Activated CD4-positive, alpha-beta T cell treated with anti-CD3 and anti-CD28 coated beads for 36 hours (primary cell): ENCODE measurements at regions of chr9 and their contacts with region 1.

Region 1: DNA sequence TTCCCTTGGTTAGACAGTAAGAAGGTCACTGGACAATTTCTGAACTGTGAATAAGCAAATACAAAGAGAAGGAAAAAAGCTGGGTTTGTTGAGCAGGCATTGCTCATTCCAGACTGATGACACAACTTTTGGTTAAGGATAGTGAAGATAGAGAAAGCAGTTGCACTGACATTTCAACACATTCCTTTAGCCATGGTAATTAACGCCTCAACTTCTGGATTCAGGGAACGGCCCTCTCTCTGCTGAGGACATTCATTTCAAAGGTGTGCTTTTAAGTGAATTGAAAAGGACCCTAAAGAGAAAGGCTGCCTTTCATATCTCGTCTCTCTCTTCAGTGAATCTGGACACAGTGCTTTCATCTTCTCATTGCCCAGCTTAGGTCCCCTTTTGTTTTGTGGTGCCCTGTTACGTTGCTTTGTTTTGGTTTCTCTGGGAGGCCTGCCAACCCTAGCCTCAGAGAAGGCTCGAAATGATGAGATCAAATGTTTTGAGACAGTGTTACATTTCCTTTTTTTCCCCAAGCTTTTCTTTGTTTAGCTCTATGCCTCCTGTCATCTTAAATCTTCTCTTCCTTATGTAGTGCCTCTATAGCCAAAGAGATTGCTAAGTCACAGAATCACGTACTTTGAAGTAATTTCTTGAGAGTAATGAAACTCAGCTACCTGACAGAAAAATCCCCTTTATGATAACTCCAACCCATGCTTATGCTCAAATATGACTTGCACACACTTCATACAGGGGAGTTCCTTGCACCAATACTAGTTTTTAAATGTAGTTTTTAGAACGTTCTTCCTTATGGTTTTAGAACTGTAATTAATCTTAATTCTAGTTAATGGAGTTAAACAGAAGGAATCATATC is 94.4 kb upstream of the IFNE start:
- DNase-seq: peak; percentile 66
- ATAC-seq: peak; percentile 90
- H3K4me3 Mint-ChIP-seq: no peak overlapping the region
- H3K27ac Mint-ChIP-seq: peak overlapping the region; percentile 61
- H3K4me1 Mint-ChIP-seq: peaks cover 32% of the 10 kb centered on the region
- H3K27me3 Mint-ChIP-seq: peaks cover 4% of the 10 kb centered on the region

Region 2: GRCh38 chr9:21210311-21210710 is 366.2 kb before region 1 on chr9:
- CTCF ChIA-PET with region 1: no interaction called
- POLR2A ChIA-PET with region 1: no interaction called
- intact Hi-C with region 1: no loop called
- DNase-seq: no peak
- ATAC-seq: no peak
- H3K4me3 Mint-ChIP-seq: no peak overlapping the region
- H3K27ac Mint-ChIP-seq: no peak overlapping the region
- H3K4me1 Mint-ChIP-seq: peaks cover 8% of the 10 kb centered on the region
- H3K27me3 Mint-ChIP-seq: peaks cover 14% of the 10 kb centered on the region

Region 3: DNA sequence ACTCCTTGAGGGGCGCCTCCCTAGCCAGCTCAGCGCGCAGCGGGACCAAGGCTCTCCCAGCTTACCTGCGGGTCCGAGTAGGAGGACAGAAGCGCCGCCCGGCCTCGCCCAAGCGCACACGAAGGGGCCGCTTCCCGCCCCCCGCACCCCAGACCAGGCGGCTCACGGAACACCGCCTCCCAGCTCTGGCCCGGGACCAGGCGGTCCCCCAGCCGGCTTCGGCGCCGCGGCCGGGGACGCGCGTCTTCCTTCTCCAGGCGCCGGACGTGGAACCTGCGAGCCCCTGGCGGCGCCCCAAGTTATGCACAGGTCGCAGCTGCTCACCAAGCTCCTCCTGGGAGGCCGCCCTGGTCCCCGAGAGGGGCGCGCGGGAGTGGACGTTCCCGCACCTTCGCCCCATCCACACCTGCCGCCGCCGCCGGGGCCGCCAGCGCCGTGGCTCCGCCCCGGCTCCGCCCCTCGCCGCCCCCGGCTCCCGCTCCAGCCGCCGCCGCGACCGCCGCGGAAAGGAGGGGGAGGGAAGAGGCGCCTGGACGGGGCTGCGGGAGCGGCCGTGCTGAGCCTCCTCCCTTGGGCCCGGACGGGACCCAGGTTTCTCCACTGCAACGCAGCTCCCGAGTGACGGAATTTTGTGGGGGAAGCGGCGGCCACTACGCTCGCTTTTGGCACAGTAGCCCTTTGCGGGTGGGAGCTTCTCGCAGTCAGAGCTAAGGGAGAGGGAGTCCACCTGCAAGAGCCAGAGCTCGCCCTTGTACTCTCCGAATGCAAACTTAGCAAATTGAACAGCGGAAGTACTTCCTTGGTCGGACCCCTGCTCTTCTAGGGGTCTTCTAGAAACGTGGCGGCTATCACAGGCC is 16.9 kb before region 1 on chr9:
- CTCF ChIA-PET with region 1: interaction called, 8 read pairs
- POLR2A ChIA-PET with region 1: interaction called, 5 read pairs
- intact Hi-C with region 1: loop called in 1 of 2 experiments (anchors 2 kb)
- DNase-seq: peak; percentile 69
- ATAC-seq: peak; percentile 88
- H3K4me3 Mint-ChIP-seq: peak overlapping the region; percentile 86
- H3K27ac Mint-ChIP-seq: no peak overlapping the region
- H3K4me1 Mint-ChIP-seq: peaks cover 33% of the 10 kb centered on the region
- H3K27me3 Mint-ChIP-seq: peaks cover 30% of the 10 kb centered on the region

Region 4: DNA sequence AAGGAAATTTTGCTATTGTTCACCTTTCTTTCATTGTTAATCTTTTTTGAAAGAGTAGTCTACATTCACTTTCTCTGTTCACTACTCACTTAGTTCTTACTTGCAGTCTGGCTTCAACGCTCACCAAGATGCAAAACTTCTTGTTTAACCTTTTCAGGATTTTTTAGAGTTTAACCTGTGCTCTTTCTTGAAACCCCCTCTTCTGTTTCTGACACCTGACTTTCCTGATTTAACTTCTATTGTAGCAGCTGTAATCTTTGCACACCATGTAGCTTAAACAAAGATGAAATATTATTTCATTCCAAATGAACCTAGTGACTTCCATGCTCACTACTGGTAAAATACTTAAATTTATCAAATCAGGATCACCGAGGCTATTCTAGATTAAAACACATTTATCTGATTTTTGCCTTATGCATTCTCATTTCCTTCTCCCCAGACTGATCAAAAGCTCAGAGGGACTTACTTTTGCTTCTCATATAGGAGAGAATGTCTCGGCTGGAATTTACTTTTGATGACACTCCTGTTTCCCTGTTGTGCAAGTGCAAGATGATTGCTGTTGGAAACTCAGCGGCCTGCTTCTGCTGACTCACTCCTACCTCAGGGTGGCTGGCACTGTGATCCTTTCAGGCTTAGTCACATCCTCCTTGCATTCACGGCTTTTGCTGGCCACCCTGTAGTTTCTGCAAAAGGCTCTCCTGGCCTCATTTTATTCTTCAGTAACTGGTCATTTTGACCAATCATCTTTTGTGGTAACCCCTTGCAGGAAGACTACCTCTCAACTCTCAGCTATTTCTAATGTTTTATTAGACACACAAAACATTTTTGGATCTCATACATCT is 14.9 kb after region 1 on chr9:
- CTCF ChIA-PET with region 1: interaction called, 3 read pairs
- POLR2A ChIA-PET with region 1: no interaction called
- intact Hi-C with region 1: loop called in 1 of 2 experiments (anchors 1 kb)
- DNase-seq: peak; percentile 81
- ATAC-seq: peak; percentile 99
- H3K4me3 Mint-ChIP-seq: no peak overlapping the region
- H3K27ac Mint-ChIP-seq: peak overlapping the region; percentile 11
- H3K4me1 Mint-ChIP-seq: peaks cover 18% of the 10 kb centered on the region
- H3K27me3 Mint-ChIP-seq: no peaks in the 10 kb centered on the region

Region 5: DNA sequence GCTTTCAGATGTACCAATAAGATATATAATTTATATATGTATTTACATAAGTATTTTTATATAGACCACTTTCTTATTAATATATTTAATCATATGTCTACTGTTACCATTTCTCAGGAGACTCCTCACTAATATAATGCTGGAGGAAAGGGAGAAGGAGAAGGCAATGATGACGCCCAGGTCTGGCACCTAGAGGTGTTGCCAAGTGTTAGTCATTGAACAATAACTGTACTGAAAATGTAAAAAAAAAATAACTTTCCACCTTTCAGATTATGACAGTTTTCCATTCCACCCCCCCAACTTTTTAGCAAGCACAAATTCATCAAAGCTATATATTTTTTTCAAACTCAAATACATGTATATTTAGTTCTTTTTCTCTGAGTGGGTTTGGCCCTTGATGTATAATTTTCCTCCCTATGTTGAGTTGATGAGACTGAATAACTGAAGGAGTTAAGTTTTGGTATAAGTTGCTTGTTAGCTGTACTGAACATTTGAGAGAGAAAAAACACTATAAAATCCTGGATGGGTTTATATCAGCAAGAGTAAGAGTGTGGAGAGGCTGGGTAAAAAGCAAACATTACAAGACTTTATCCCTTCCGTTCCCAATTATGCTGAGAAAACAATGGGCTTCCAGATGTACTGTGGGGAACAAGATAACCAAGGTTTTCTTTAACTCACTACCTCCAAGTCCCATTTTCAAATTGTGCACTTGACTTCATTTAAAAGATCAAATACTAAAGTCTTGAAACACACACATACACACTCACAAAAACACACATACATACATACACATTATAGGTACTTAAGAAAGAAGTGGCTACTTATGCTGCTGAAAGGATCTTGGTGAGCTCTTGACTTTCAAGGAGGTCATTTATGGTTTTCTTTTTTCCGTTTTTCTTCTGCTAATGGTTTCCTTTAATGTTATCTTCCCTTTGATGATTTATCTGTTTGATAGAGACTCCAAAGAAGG is 48.4 kb after region 1 on chr9:
- CTCF ChIA-PET with region 1: no interaction called
- POLR2A ChIA-PET with region 1: no interaction called
- intact Hi-C with region 1: loop called in 1 of 2 experiments (anchors 5 kb)
- DNase-seq: peak; percentile 37
- ATAC-seq: peak; percentile 80
- H3K4me3 Mint-ChIP-seq: no peak overlapping the region
- H3K27ac Mint-ChIP-seq: peak overlapping the region; percentile 28
- H3K4me1 Mint-ChIP-seq: peaks cover 29% of the 10 kb centered on the region
- H3K27me3 Mint-ChIP-seq: no peaks in the 10 kb centered on the region